ENCODE measurements at regions of chr6 and their contacts with region 1.

Region 1: GRCh38 chr6:125974214-125974866 is 12.0 kb upstream of the TRMT11 start:
- DNase-seq: peak in 1 of 35 experiments; percentile 63
- ATAC-seq: peak in 2 of 4 experiments; percentile 47 to 63
- H3K4me3 ChIP-seq: no peak overlapping the region
- H3K4me3 Mint-ChIP-seq: no peak overlapping the region
- H3K27ac ChIP-seq: no peak overlapping the region
- H3K27ac Mint-ChIP-seq: no peak overlapping the region
- H3K4me1 ChIP-seq: peaks cover 0 to 2% of the 10 kb centered on the region in 2 experiments
- H3K4me1 Mint-ChIP-seq: peaks cover 11 to 12% (median 11%) of the 10 kb centered on the region in 3 donors
- H3K27me3 ChIP-seq: no peaks in the 10 kb centered on the region
- H3K27me3 Mint-ChIP-seq: no peaks in the 10 kb centered on the region

Region 2: GRCh38 chr6:125314019-125314581 is 660.2 kb before region 1 on chr6:
- CTCF ChIA-PET with region 1: interaction called, 5 to 16 read pairs
- POLR2A ChIA-PET with region 1: no interaction called
- DNase-seq: peak in 16 of 35 experiments; percentile 6 to 61 (median 16)
- ATAC-seq: peak; percentile 46 to 67 (median 50)
- H3K4me3 ChIP-seq: no peak overlapping the region
- H3K4me3 Mint-ChIP-seq: no peak overlapping the region
- H3K27ac ChIP-seq: no peak overlapping the region
- H3K27ac Mint-ChIP-seq: no peak overlapping the region
- H3K4me1 ChIP-seq: no peaks in the 10 kb centered on the region
- H3K4me1 Mint-ChIP-seq: peaks cover 0 to 2% (median 2%) of the 10 kb centered on the region in 3 donors
- H3K27me3 ChIP-seq: peaks cover 0 to 7% of the 10 kb centered on the region in 2 experiments
- H3K27me3 Mint-ChIP-seq: peaks cover 14 to 16% of the 10 kb centered on the region in 2 donors

Region 3: GRCh38 chr6:125611573-125612344 is 362.6 kb before region 1 on chr6:
- CTCF ChIA-PET with region 1: no interaction called
- POLR2A ChIA-PET with region 1: no interaction called
- DNase-seq: no peak
- ATAC-seq: no peak
- H3K4me3 ChIP-seq: no peak overlapping the region
- H3K4me3 Mint-ChIP-seq: no peak overlapping the region
- H3K27ac ChIP-seq: no peak overlapping the region
- H3K27ac Mint-ChIP-seq: no peak overlapping the region
- H3K4me1 ChIP-seq: no peaks in the 10 kb centered on the region
- H3K4me1 Mint-ChIP-seq: no peaks in the 10 kb centered on the region
- H3K27me3 ChIP-seq: no peaks in the 10 kb centered on the region
- H3K27me3 Mint-ChIP-seq: peaks cover 8 to 20% of the 10 kb centered on the region in 2 donors

Region 4: GRCh38 chr6:125818225-125818657 is 156.1 kb before region 1 on chr6:
- CTCF ChIA-PET with region 1: no interaction called
- POLR2A ChIA-PET with region 1: no interaction called
- DNase-seq: no peak
- ATAC-seq: no peak
- H3K4me3 ChIP-seq: no peak overlapping the region
- H3K4me3 Mint-ChIP-seq: no peak overlapping the region
- H3K27ac ChIP-seq: no peak overlapping the region
- H3K27ac Mint-ChIP-seq: peak overlapping the region in 1 of 2 donors; percentile 43
- H3K4me1 ChIP-seq: peaks cover 4 to 6% of the 10 kb centered on the region in 2 experiments
- H3K4me1 Mint-ChIP-seq: peaks cover 39 to 72% (median 56%) of the 10 kb centered on the region in 3 donors
- H3K27me3 ChIP-seq: no peaks in the 10 kb centered on the region
- H3K27me3 Mint-ChIP-seq: no peaks in the 10 kb centered on the region

Region 5: GRCh38 chr6:125835221-125835744 is 139.1 kb before region 1 on chr6:
- CTCF ChIA-PET with region 1: no interaction called
- POLR2A ChIA-PET with region 1: no interaction called
- DNase-seq: no peak
- ATAC-seq: no peak
- H3K4me3 ChIP-seq: no peak overlapping the region
- H3K4me3 Mint-ChIP-seq: no peak overlapping the region
- H3K27ac ChIP-seq: peak overlapping the region; percentile 8
- H3K27ac Mint-ChIP-seq: peak overlapping the region in 1 of 2 donors; percentile 95
- H3K4me1 ChIP-seq: peaks cover 18 to 27% of the 10 kb centered on the region in 2 experiments
- H3K4me1 Mint-ChIP-seq: peaks cover 50 to 69% (median 54%) of the 10 kb centered on the region in 3 donors
- H3K27me3 ChIP-seq: no peaks in the 10 kb centered on the region
- H3K27me3 Mint-ChIP-seq: no peaks in the 10 kb centered on the region

Region 6: DNA sequence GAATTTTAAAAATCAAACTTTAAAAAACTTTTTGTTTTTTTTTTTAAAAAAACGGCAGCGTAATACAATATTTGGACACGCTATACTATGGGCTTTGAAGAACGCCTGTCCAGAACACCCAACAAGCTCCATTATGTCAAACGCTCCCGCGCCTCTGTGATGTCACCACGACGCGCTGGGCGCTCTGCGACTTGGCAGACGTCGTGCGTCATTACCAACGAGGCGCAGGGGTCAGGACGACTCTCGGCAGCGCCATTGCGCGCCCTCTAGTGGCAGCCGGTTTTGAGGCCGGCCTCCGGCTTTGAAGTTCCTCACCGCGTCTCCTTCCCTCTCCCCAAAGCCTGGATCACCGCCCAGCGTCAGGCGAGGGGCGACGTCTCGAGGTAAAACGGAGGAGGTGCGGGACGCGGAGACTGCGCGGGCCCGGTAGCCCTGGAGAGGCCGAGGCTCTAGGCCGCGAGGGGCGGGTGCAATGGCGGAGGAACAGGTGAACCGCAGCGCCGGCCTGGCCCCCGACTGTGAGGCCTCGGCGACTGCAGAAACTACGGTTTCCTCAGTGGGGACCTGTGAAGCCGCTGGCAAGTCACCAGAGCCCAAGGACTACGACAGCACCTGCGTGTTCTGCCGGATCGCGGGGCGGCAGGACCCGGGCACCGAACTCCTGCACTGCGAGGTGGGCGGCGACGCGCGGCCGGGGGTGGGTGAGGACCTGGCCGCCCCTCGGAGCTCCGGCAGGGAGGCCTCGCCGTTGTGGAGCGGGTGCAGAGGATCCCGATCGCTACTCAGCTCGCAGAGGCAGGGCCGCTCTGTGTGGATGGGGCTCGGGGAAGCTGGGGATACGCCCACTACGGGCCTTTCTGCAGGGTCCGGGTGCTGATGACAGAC is 17.6 kb before region 1 on chr6 and contains the start of gene HINT3:
- CTCF ChIA-PET with region 1: interaction called, 12 to 29 read pairs
- POLR2A ChIA-PET with region 1: interaction called in 1 of 2 experiments, 4 read pairs
- DNase-seq: peak; percentile 93 to 99 (median 97)
- ATAC-seq: peak; percentile 88 to 94 (median 91)
- H3K4me3 ChIP-seq: peak within 1 kb of the TSS; percentile 61 to 92
- H3K4me3 Mint-ChIP-seq: peak within 1 kb of the TSS in 1 of 3 donors; percentile 60
- H3K27ac ChIP-seq: peak within 1 kb of the TSS; percentile 98
- H3K27ac Mint-ChIP-seq: peak within 1 kb of the TSS in 1 of 2 donors; percentile 86
- H3K4me1 ChIP-seq: peaks cover 8 to 18% of the 10 kb centered on the region in 2 experiments
- H3K4me1 Mint-ChIP-seq: peaks cover 0 to 19% (median 14%) of the 10 kb centered on the region in 3 donors
- H3K27me3 ChIP-seq: peaks cover 0 to 3% of the 10 kb centered on the region in 2 experiments
- H3K27me3 Mint-ChIP-seq: peaks cover 0 to 6% of the 10 kb centered on the region in 2 donors
- total RNA-seq, gene HINT3: 8.5 to 11.7 (median 10.5) TPM

Region 7: DNA sequence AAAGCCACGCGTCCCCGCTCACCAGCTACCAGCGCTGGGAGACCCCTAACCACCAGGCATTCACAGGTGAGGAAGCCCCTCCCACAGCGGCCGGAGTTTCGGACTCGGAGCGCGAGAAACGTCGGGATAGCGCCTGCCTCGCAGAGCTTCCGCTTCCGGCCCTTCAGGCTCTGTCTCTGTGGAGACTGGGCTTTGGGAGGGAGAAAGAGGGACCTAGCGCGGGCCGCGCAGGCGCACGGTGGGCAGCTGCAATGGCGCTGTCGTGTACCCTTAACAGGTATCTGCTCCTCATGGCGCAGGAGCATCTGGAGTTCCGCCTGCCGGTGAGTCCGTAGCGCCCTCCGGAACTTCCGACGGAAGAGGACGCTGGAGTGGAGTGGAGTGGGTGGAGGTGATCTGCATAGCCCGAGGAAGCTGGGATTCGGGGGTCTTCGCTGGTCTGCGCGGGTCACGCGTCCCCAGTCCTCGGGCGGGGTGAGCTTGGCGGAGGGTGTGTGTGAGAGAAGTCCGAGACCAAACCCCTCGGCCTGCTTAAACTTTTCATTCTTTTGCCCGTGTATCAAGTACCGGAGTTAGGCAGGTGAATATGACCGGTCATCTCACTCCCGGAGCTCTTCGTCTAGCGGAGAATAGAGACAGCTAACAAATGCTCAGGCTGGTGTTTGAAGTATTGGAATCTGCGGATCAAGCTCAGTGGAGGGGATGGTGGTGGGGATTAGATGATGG is 12.1 kb after region 1 on chr6 and contains the start of gene TRMT11:
- CTCF ChIA-PET with region 1: interaction called, 5 to 16 read pairs
- POLR2A ChIA-PET with region 1: interaction called in 1 of 2 experiments, 3 read pairs
- DNase-seq: peak; percentile 58 to 88 (median 75)
- ATAC-seq: peak; percentile 94 to 97 (median 96)
- H3K4me3 ChIP-seq: peak within 1 kb of the TSS; percentile 79 to 96
- H3K4me3 Mint-ChIP-seq: peak within 1 kb of the TSS in 2 of 3 donors; percentile 25 to 42
- H3K27ac ChIP-seq: peak within 1 kb of the TSS; percentile 91
- H3K27ac Mint-ChIP-seq: peak within 1 kb of the TSS in 1 of 2 donors; percentile 35
- H3K4me1 ChIP-seq: peaks cover 5 to 9% of the 10 kb centered on the region in 2 experiments
- H3K4me1 Mint-ChIP-seq: peaks cover 6 to 23% (median 22%) of the 10 kb centered on the region in 3 donors
- H3K27me3 ChIP-seq: no peaks in the 10 kb centered on the region
- H3K27me3 Mint-ChIP-seq: no peaks in the 10 kb centered on the region
- total RNA-seq, gene TRMT11: 14.2 to 30.3 (median 21.6) TPM

Measured in T-cell (primary cell).